ENCODE measurements at regions of chr2 and their contacts with region 1.

Region 1: GRCh38 chr2:44087036-44087713 is 81.5 kb upstream of the PPM1B start:
- DNase-seq: peak; percentile 71 to 82 (median 80)
- H3K4me3 ChIP-seq: peak overlapping the region in 6 of 7 experiments; percentile 51 to 76 (median 66)
- H3K27ac ChIP-seq: peak overlapping the region; percentile 46 to 66
- H3K4me1 ChIP-seq: peaks cover 18 to 46% (median 43%) of the 10 kb centered on the region in 4 experiments
- H3K27me3 ChIP-seq: no peaks in the 10 kb centered on the region

Region 2: GRCh38 chr2:44063033-44063432 is 24.1 kb before region 1 on chr2:
- CTCF ChIA-PET with region 1: interaction called, 13 read pairs
- POLR2A ChIA-PET with region 1: no interaction called
- DNase-seq: no peak
- H3K4me3 ChIP-seq: no peak overlapping the region
- H3K27ac ChIP-seq: no peak overlapping the region
- H3K4me1 ChIP-seq: no peaks in the 10 kb centered on the region
- H3K27me3 ChIP-seq: no peaks in the 10 kb centered on the region

Region 3: GRCh38 chr2:44218771-44219170 is 131.6 kb after region 1 on chr2:
- CTCF ChIA-PET with region 1: interaction called, 11 read pairs
- POLR2A ChIA-PET with region 1: no interaction called
- DNase-seq: peak in 2 of 3 donors; percentile 22 to 34
- H3K4me3 ChIP-seq: no peak overlapping the region
- H3K27ac ChIP-seq: no peak overlapping the region
- H3K4me1 ChIP-seq: no peaks in the 10 kb centered on the region
- H3K27me3 ChIP-seq: no peaks in the 10 kb centered on the region

Region 4: GRCh38 chr2:44295607-44296359 is 208.6 kb after region 1 on chr2:
- CTCF ChIA-PET with region 1: interaction called, 21 read pairs
- POLR2A ChIA-PET with region 1: no interaction called
- DNase-seq: peak; percentile 6 to 25 (median 19)
- H3K4me3 ChIP-seq: no peak overlapping the region
- H3K27ac ChIP-seq: no peak overlapping the region
- H3K4me1 ChIP-seq: peaks cover 0 to 5% (median 4%) of the 10 kb centered on the region in 4 experiments
- H3K27me3 ChIP-seq: no peaks in the 10 kb centered on the region

Region 5: DNA sequence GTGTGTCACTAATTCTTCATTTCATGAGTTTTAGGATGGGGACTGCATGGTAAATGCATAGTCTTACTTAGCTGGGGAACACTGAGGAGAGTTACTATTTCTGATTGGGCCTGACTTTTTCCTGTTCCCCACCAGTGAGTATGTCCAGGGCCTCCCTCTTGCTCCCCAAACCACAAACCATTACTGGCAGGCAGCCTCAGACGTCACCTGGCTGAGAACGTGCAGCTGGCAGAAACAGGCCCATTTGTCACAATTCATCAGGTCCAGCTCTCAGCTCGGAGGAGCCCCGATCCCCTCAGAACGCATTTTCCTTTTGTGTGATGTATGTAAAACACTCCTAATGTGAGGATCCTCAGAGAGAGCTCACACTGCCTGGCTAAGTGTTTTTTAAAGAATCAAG is 782.6 kb after region 1 on chr2:
- CTCF ChIA-PET with region 1: no interaction called
- POLR2A ChIA-PET with region 1: no interaction called
- DNase-seq: no peak
- H3K4me3 ChIP-seq: no peak overlapping the region
- H3K27ac ChIP-seq: no peak overlapping the region
- H3K4me1 ChIP-seq: no peaks in the 10 kb centered on the region
- H3K27me3 ChIP-seq: peaks cover 0 to 21% (median 11%) of the 10 kb centered on the region in 5 experiments

Measured in common myeloid progenitor, CD34-positive (primary cell).